CD4-positive, alpha-beta T cell (primary cell): ENCODE measurements at regions of chr15 and their contacts with region 1.

Region 1: DNA sequence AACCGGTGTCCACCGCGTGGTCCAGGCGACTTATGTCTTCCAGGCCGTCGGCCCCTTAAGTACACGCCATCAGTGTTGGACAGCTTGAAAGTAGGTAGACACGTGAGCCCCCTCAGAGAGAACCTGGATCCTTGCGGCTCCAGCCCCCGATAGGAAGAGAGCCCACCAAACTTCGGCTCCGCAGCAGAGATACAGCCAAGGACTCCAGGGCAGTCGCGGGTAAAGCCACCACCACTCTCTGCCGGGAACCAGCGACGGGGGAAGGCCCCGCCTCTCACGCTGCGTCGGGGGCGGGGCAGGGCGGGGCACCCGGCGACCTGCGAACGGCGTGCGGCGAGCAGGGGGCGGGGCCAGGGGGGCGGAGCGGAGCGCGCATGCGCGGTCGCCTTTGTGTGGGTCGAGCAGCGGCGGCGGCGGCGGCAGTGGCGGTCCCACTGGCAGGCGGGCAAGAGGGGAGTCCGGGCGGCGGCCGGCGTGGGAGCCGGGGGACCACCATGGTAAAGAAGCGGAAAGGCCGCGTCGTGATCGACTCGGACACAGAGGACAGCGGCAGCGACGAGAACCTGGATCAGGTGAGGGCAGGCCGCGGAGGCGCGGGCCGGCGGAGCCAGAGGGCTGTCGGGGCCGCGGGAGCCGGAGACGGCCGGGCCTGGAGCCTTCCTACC is at the start of gene RTF1:
- DNase-seq: peak; percentile 91 to 99 (median 97)
- ATAC-seq: peak; percentile 96
- H3K4me3 ChIP-seq: peak within 1 kb of the TSS; percentile 97
- H3K4me3 Mint-ChIP-seq: peak within 1 kb of the TSS; percentile 90
- H3K27ac ChIP-seq: peak within 1 kb of the TSS; percentile 48 to 72
- H3K27ac Mint-ChIP-seq: peak within 1 kb of the TSS; percentile 92
- H3K4me1 ChIP-seq: peaks cover 30% of the 10 kb centered on the region
- H3K4me1 Mint-ChIP-seq: peaks cover 47% of the 10 kb centered on the region
- H3K27me3 ChIP-seq: no peaks in the 10 kb centered on the region
- H3K27me3 Mint-ChIP-seq: no peaks in the 10 kb centered on the region
- CTCF ChIP-seq: no peak
- total RNA-seq, gene RTF1: 29.9 to 34.2 TPM

Region 2: GRCh38 chr15:40564591-40565332 is 852.1 kb before region 1 on chr15 and contains the start of gene CCDC32:
- CTCF ChIA-PET with region 1: no interaction called
- POLR2A ChIA-PET with region 1: no interaction called
- intact Hi-C with region 1: loop called in 1 of 2 experiments (anchors 10 kb)
- DNase-seq: peak; percentile 84 to 99 (median 92)
- ATAC-seq: peak; percentile 93
- H3K4me3 ChIP-seq: peak within 1 kb of the TSS; percentile 76
- H3K4me3 Mint-ChIP-seq: peak within 1 kb of the TSS; percentile 97
- H3K27ac ChIP-seq: peak within 1 kb of the TSS; percentile 85 to 89
- H3K27ac Mint-ChIP-seq: peak within 1 kb of the TSS; percentile 88
- H3K4me1 ChIP-seq: peaks cover 34% of the 10 kb centered on the region
- H3K4me1 Mint-ChIP-seq: peaks cover 43% of the 10 kb centered on the region
- H3K27me3 ChIP-seq: no peaks in the 10 kb centered on the region
- H3K27me3 Mint-ChIP-seq: no peaks in the 10 kb centered on the region
- CTCF ChIP-seq: no peak
- total RNA-seq, gene CCDC32: 20.9 to 21.3 TPM

Region 3: GRCh38 chr15:41116116-41116871 is 300.6 kb before region 1 on chr15 and contains the start of gene INO80:
- CTCF ChIA-PET with region 1: no interaction called
- POLR2A ChIA-PET with region 1: no interaction called
- intact Hi-C with region 1: loop called in 1 of 2 experiments (anchors 5 kb)
- DNase-seq: peak; percentile 90 to 98 (median 95)
- ATAC-seq: peak; percentile 79
- H3K4me3 ChIP-seq: peak within 1 kb of the TSS; percentile 99
- H3K4me3 Mint-ChIP-seq: peak within 1 kb of the TSS; percentile 93
- H3K27ac ChIP-seq: peak within 1 kb of the TSS; percentile 79 to 91
- H3K27ac Mint-ChIP-seq: peak within 1 kb of the TSS; percentile 98
- H3K4me1 ChIP-seq: peaks cover 20% of the 10 kb centered on the region
- H3K4me1 Mint-ChIP-seq: peaks cover 25% of the 10 kb centered on the region
- H3K27me3 ChIP-seq: no peaks in the 10 kb centered on the region
- H3K27me3 Mint-ChIP-seq: no peaks in the 10 kb centered on the region
- CTCF ChIP-seq: no peak
- total RNA-seq, gene INO80: 20.3 to 22.9 TPM

Region 4: GRCh38 chr15:41331833-41332787 is 84.8 kb before region 1 on chr15 and contains the start of gene OIP5:
- CTCF ChIA-PET with region 1: no interaction called
- POLR2A ChIA-PET with region 1: no interaction called
- intact Hi-C with region 1: loop called in 1 of 2 experiments (anchors 5 kb)
- DNase-seq: peak; percentile 94 to 99 (median 97)
- ATAC-seq: peak; percentile 96
- H3K4me3 ChIP-seq: peak within 1 kb of the TSS; percentile 77
- H3K4me3 Mint-ChIP-seq: peak within 1 kb of the TSS; percentile 95
- H3K27ac ChIP-seq: peak within 1 kb of the TSS in 1 of 2 donors; percentile 38
- H3K27ac Mint-ChIP-seq: peak within 1 kb of the TSS; percentile 78
- H3K4me1 ChIP-seq: peaks cover 21% of the 10 kb centered on the region
- H3K4me1 Mint-ChIP-seq: peaks cover 19% of the 10 kb centered on the region
- H3K27me3 ChIP-seq: no peaks in the 10 kb centered on the region
- H3K27me3 Mint-ChIP-seq: no peaks in the 10 kb centered on the region
- CTCF ChIP-seq: peak; percentile 58
- total RNA-seq, gene OIP5: 0.20 to 0.36 TPM

Region 5: GRCh38 chr15:41443275-41443674 is 26.4 kb after region 1 on chr15:
- CTCF ChIA-PET with region 1: no interaction called
- POLR2A ChIA-PET with region 1: no interaction called
- intact Hi-C with region 1: no loop called
- DNase-seq: peak in 2 of 14 experiments; percentile 19 to 21
- ATAC-seq: no peak
- H3K4me3 ChIP-seq: no peak overlapping the region
- H3K4me3 Mint-ChIP-seq: no peak overlapping the region
- H3K27ac ChIP-seq: no peak overlapping the region
- H3K27ac Mint-ChIP-seq: peak overlapping the region; percentile 66
- H3K4me1 ChIP-seq: peaks cover 9% of the 10 kb centered on the region
- H3K4me1 Mint-ChIP-seq: peaks cover 20% of the 10 kb centered on the region
- H3K27me3 ChIP-seq: no peaks in the 10 kb centered on the region
- H3K27me3 Mint-ChIP-seq: no peaks in the 10 kb centered on the region
- CTCF ChIP-seq: no peak

Region 6: GRCh38 chr15:42273102-42273899 is 856.4 kb after region 1 on chr15 and contains the starts of genes GANC and TMEM87A:
- CTCF ChIA-PET with region 1: no interaction called
- POLR2A ChIA-PET with region 1: no interaction called
- intact Hi-C with region 1: loop called in 1 of 2 experiments (anchors 5 kb)
- DNase-seq: peak; percentile 90 to 99 (median 94)
- ATAC-seq: peak; percentile 89
- H3K4me3 ChIP-seq: peak within 1 kb of the TSS; percentile 70
- H3K4me3 Mint-ChIP-seq: peak within 1 kb of the TSS; percentile 90
- H3K27ac ChIP-seq: peak within 1 kb of the TSS; percentile 92 to 95
- H3K27ac Mint-ChIP-seq: peak within 1 kb of the TSS; percentile 98
- H3K4me1 ChIP-seq: peaks cover 12% of the 10 kb centered on the region
- H3K4me1 Mint-ChIP-seq: peaks cover 76% of the 10 kb centered on the region
- H3K27me3 ChIP-seq: no peaks in the 10 kb centered on the region
- H3K27me3 Mint-ChIP-seq: no peaks in the 10 kb centered on the region
- CTCF ChIP-seq: no peak
- total RNA-seq, gene GANC: 22.3 to 23.9 TPM
- total RNA-seq, gene TMEM87A: 48.7 to 51.4 TPM